ENCODE measurements at regions of chr20 and their contacts with region 1.

Region 1: DNA sequence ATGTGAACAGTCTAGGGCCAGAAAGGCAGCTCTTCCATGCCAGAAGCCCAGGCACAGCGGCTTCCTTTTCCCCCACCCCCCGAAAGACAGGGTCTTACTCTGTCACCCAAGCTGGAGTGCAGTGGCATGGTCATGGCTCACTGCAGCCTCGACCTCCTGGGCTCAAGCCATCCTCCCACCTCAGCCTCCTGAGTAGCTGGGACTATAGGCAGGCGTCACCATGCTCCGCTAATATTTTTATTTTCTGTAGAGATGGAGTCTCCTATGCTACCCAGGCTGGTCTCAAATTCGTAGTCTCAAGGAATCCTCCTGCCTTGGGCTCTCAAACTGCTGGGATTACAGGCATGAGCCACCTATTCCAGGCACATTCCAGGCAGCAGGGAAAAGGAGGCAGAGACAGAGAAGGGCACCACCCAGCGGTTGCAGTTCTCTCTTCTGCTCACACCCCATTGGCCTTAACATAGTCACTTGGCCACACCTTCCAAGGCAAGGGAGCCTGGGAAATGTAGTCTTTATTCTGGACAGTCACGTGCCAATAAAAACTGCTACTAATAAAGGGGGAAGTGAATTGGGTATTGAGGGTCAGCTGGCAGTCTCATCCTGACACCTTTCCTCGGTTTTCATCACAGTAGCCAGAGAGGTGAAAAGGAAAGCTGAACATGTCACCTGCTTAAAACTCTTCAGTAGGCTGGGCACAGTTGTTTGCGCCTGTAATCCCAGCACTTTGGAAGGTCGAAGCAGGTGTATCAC is 205.9 kb downstream of the ZMYND8 start:
- DNase-seq: peak in 2 of 3 donors; percentile 35 to 67
- ATAC-seq: peak; percentile 93 to 96 (median 94)
- H3K4me3 ChIP-seq: no peak overlapping the region
- H3K27ac ChIP-seq: no peak overlapping the region
- H3K4me1 ChIP-seq: no peaks in the 10 kb centered on the region
- H3K27me3 ChIP-seq: no peaks in the 10 kb centered on the region
- CTCF ChIP-seq: peak; percentile 50 to 64 (median 60)
- POLR2A ChIP-seq: no peak

Region 2: GRCh38 chr20:46757754-46758678 is 392.6 kb before region 1 on chr20:
- intact Hi-C with region 1: loop called in 1 of 2 experiments (anchors 5 kb)
- DNase-seq: peak in 2 of 3 donors; percentile 39 to 60
- ATAC-seq: peak; percentile 73 to 80 (median 74)
- H3K4me3 ChIP-seq: no peak overlapping the region
- H3K27ac ChIP-seq: no peak overlapping the region
- H3K4me1 ChIP-seq: no peaks in the 10 kb centered on the region
- H3K27me3 ChIP-seq: no peaks in the 10 kb centered on the region
- CTCF ChIP-seq: peak; percentile 73 to 95 (median 94)
- POLR2A ChIP-seq: no peak

Region 3: DNA sequence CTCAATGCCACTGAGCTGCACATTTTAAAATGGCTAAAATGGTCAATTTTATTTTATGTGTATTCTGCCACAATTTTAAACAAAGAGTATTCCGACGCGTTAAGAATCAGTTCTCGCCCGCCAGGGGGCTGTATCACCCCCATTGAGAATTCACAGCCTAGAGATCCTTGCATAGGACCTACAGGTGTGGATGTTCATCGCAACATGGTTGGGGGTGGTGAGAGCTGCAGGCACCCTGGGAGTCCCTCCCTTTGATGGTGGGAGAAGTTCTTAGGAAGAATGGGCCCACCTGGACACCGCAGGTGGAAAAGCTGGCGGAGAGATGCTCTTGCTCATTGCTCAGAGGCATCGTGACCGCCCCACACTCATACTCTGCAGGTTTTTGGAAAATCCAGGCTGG is 377.7 kb before region 1 on chr20:
- intact Hi-C with region 1: loop called in 1 of 2 experiments (anchors 10 kb)
- DNase-seq: no peak
- ATAC-seq: peak in 1 of 4 donors; percentile 47
- H3K4me3 ChIP-seq: no peak overlapping the region
- H3K27ac ChIP-seq: no peak overlapping the region
- H3K4me1 ChIP-seq: no peaks in the 10 kb centered on the region
- H3K27me3 ChIP-seq: no peaks in the 10 kb centered on the region
- CTCF ChIP-seq: peak; percentile 9 to 32 (median 23)
- POLR2A ChIP-seq: no peak